H1 (cell line): ENCODE measurements at regions of chr22 and their contacts with region 1.

Region 1: DNA sequence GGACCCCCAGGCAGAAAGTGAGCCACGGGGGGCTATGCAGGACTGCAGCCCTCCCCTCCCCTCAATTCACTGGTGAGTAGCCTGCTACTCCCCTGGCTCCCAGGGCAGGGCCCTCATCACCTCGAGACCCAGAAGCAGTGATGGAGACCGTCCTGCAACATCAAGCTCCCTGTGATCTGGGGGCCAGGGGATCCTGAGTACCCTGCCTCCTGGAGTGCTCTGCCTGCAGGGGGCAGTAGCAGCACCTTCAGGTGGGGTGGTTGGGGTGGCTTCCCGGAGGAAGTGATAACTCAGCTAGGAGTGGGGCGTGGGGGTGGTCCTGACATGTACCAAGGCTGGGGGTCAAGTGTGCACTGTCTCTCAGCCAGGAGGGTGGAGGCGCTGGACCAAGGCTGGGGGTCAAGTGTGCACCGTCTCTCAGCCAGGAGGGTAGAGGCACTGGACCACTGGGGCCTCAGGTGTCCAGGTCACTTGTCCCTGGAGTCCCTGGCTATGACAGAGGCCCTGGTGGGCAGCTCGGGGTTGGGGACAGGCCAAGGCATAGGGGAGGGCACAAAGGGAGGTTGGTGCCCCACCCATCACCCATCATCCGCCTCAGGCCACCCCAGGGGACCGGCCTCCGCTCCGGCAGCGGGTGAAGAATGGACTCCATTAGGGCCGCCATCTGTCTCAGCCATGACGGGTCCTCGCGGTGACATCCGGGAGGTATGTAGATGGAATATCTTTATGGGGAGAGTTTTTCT is 9.4 kb downstream of the RTN4R start:
- DNase-seq: no peak
- H3K4me3 ChIP-seq: no peak overlapping the region
- H3K27ac ChIP-seq: no peak overlapping the region
- H3K4me1 ChIP-seq: no peaks in the 10 kb centered on the region
- H3K27me3 ChIP-seq: no peaks in the 10 kb centered on the region
- CTCF ChIP-seq: peak; percentile 43 to 69 (median 52)
- EP300 ChIP-seq: no peak
- POLR2A ChIP-seq: no peak
- RAD21 ChIP-seq: peak in 1 of 2 experiments; percentile 40; a peak in 2 of 4 replicates

Region 2: DNA sequence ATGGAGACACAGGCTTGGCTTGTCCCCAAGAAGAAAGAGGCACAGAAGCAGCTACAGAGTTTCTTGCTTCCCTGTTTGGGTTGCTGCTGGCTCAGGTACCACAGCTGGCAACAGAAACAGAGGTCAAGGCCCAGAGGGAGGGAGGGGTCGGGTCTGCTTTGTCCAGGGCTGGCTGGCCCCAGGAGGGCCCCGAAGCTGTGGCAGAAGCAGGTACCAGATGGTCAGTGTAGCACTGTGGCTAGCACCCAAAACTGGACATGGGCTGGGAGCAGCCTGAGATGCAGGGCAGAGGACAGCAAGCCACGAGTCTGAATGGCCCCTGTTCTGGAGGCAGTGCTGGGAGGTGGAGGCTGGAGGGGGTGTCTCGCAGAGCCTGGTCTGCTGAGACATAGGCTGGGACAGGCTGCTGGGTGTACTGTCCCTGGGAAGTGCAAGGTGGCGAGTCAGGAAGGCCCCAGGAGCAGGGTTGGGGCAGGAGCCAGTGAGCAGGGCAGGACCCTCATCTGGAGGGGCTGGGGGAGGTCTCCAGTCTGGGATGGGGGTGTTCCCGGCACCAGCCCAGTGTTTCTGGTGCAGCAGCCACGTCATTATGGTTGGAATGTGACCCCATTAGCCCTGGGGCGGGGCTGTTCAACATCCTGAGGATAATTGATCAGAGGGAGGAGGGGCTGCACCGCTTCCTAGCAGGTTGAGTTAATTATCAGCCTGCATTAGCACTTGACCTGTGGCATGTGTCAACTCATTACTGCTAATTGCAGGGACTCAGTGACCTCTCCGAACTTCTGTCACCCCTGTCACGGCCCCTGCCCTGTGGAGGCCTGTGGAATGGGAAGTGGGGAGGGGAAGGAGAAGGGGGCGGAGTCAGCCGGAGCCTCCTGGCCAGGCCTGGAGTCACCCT is 55.4 kb before region 1 on chr22:
- CTCF ChIA-PET with region 1: no interaction called
- POLR2A ChIA-PET with region 1: no interaction called
- DNase-seq: peak; percentile 38 to 66
- H3K4me3 ChIP-seq: no peak overlapping the region
- H3K27ac ChIP-seq: no peak overlapping the region
- H3K4me1 ChIP-seq: peaks cover 0 to 26% (median 16%) of the 10 kb centered on the region in 4 experiments; a peak in 6 of 7 replicates
- H3K27me3 ChIP-seq: no peaks in the 10 kb centered on the region
- CTCF ChIP-seq: no peak
- EP300 ChIP-seq: no peak
- POLR2A ChIP-seq: no peak
- RAD21 ChIP-seq: no peak

Region 3: GRCh38 chr22:20243537-20244249 is 15.1 kb before region 1 on chr22:
- CTCF ChIA-PET with region 1: interaction called, 31 read pairs
- POLR2A ChIA-PET with region 1: interaction called, 4 read pairs
- DNase-seq: no peak
- H3K4me3 ChIP-seq: no peak overlapping the region
- H3K27ac ChIP-seq: no peak overlapping the region
- H3K4me1 ChIP-seq: peaks cover 7 to 49% (median 23%) of the 10 kb centered on the region in 4 experiments
- H3K27me3 ChIP-seq: no peaks in the 10 kb centered on the region
- CTCF ChIP-seq: no peak
- EP300 ChIP-seq: no peak
- POLR2A ChIP-seq: no peak
- RAD21 ChIP-seq: no peak

Region 4: GRCh38 chr22:20283674-20284066 is 24.9 kb after region 1 on chr22:
- CTCF ChIA-PET with region 1: interaction called, 15 read pairs
- POLR2A ChIA-PET with region 1: no interaction called
- DNase-seq: no peak
- H3K4me3 ChIP-seq: no peak overlapping the region
- H3K27ac ChIP-seq: no peak overlapping the region
- H3K4me1 ChIP-seq: no peaks in the 10 kb centered on the region
- H3K27me3 ChIP-seq: no peaks in the 10 kb centered on the region
- CTCF ChIP-seq: no peak
- EP300 ChIP-seq: no peak
- POLR2A ChIP-seq: no peak
- RAD21 ChIP-seq: no peak

Region 5: GRCh38 chr22:20296598-20296997 is 37.8 kb after region 1 on chr22:
- CTCF ChIA-PET with region 1: interaction called, 10 read pairs
- POLR2A ChIA-PET with region 1: no interaction called
- DNase-seq: no peak
- H3K4me3 ChIP-seq: no peak overlapping the region
- H3K27ac ChIP-seq: no peak overlapping the region
- H3K4me1 ChIP-seq: peaks cover 0 to 5% (median 0%) of the 10 kb centered on the region in 4 experiments; a peak in 3 of 7 replicates
- H3K27me3 ChIP-seq: peaks cover 14 to 42% (median 32%) of the 10 kb centered on the region in 4 experiments
- CTCF ChIP-seq: no peak
- EP300 ChIP-seq: no peak
- POLR2A ChIP-seq: no peak
- RAD21 ChIP-seq: no peak